ENCODE measurements at regions of chr7 and their contacts with region 1.

Region 1: GRCh38 chr7:29084832-29085231 is 61.5 kb downstream of the CPVL start:
- DNase-seq: no peak
- H3K4me3 ChIP-seq: no peak overlapping the region
- H3K27ac ChIP-seq: no peak overlapping the region
- H3K4me1 ChIP-seq: peaks cover 0 to 3% (median 2%) of the 10 kb centered on the region in 3 donors
- H3K27me3 ChIP-seq: no peaks in the 10 kb centered on the region
- CTCF ChIP-seq: no peak

Region 2: DNA sequence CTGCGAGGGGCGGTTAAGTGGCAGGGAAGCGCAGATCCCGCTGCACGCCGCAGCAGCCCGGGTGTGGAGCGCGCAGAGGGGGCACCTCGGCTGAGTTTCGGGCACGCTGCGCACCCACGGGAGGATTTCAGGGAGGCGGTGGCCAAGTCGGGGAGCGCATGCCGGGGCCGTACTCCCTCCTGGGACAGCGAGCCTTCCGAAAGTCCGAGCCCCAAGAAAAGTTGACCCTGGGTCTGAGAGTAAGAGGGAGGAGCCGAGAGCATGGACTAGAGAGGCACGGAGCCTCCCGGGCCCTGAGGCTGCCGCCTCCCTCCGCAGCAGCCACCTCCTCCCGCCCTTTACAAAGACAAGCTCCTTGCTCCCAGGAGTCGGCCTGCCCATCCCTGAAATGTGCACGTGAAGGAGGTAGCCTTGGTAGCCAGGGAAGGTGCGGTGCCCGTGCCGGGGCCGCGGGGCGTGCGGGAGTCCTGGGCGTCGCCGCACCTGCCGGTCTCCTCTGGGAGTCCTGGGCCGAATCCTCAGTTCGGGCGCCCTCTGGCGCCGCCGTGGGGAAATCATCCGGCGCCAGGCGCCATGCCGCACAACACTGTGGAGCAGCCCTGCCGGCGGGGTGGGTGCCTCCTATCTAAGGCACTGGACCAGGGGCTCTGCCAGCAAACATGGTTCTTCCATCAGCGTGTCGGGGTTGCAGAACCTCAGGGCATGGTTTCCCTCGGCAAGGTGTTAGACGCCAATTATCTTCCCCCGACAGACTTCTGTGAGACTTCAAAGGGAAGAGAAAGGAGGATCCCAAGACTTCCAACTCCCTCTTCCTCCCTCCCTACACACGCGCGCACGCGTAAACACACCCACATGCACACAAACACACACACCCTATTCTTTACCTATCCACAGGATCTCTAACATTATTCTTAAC is 230.7 kb before region 1 on chr7:
- intact Hi-C with region 1: no loop called
- DNase-seq: peak; percentile 88 to 91 (median 89)
- H3K4me3 ChIP-seq: peak overlapping the region; percentile 42 to 73 (median 71)
- H3K27ac ChIP-seq: no peak overlapping the region
- H3K4me1 ChIP-seq: peaks cover 0 to 4% (median 0%) of the 10 kb centered on the region in 3 donors
- H3K27me3 ChIP-seq: no peaks in the 10 kb centered on the region
- CTCF ChIP-seq: peak; percentile 84

Region 3: GRCh38 chr7:29035044-29035740 is 49.6 kb before region 1 on chr7:
- intact Hi-C with region 1: loop called (anchors 10 kb)
- DNase-seq: no peak
- H3K4me3 ChIP-seq: no peak overlapping the region
- H3K27ac ChIP-seq: no peak overlapping the region
- H3K4me1 ChIP-seq: peaks cover 0 to 7% (median 5%) of the 10 kb centered on the region in 3 donors
- H3K27me3 ChIP-seq: no peaks in the 10 kb centered on the region
- CTCF ChIP-seq: no peak

Region 4: GRCh38 chr7:29479301-29480200 is 394.7 kb after region 1 on chr7:
- intact Hi-C with region 1: no loop called
- DNase-seq: peak; percentile 56 to 86 (median 73)
- H3K4me3 ChIP-seq: peak overlapping the region in 1 of 3 donors; percentile 30
- H3K27ac ChIP-seq: peak overlapping the region in 1 of 2 donors; percentile 8
- H3K4me1 ChIP-seq: peaks cover 0 to 12% (median 6%) of the 10 kb centered on the region in 3 donors
- H3K27me3 ChIP-seq: no peaks in the 10 kb centered on the region
- CTCF ChIP-seq: no peak

Measured in kidney (tissue), 22 donors.